ENCODE measurements at regions of chr5 and their contacts with region 1.

Region 1: DNA sequence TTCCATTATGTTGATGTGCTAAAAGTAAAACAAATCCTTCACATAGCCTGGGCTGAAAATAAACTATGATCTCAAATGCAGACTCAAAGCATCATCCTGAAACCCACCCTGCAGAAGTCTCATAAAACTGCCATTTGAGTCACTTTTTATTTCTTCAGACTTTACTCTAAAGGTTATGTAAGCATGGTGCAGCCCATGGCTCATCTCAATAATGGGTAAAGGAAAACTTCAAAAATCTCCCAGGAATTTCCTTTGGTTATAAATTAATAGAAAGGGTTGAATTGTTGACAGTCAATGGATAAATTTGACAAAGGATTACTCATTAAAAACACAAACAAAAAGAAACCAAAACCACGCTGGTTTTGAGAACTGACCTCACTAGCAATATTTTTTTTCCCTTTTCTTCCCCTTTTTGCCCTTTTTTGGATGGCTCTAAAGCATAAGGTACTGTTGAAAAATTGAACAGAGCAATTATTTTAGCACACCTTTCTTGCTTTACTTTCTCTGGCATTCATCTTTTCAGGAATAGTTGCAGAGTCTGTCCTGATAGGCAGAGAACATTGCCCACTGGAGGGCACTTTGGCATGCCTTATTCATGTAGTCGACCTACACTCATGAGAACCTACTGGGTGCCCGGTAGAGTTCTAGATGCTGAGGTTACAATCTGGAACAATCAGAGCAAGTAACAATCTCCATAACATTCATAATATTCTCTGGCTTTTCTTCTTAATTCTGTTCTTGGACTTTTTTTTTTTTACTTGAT is 191.4 kb downstream of the TMEM167A start:
- DNase-seq: peak; percentile 46
- H3K4me3 Mint-ChIP-seq: peak overlapping the region; percentile 47
- H3K27ac Mint-ChIP-seq: peak overlapping the region; percentile 18
- H3K4me1 Mint-ChIP-seq: peaks cover 29% of the 10 kb centered on the region
- H3K27me3 Mint-ChIP-seq: no peaks in the 10 kb centered on the region
- CTCF ChIP-seq: no peak

Region 2: GRCh38 chr5:83430130-83431010 is 544.6 kb after region 1 on chr5:
- CTCF ChIA-PET with region 1: no interaction called
- intact Hi-C with region 1: loop called (anchors 2 kb)
- DNase-seq: peak; percentile 81
- H3K4me3 Mint-ChIP-seq: no peak overlapping the region
- H3K27ac Mint-ChIP-seq: no peak overlapping the region
- H3K4me1 Mint-ChIP-seq: no peaks in the 10 kb centered on the region
- H3K27me3 Mint-ChIP-seq: no peaks in the 10 kb centered on the region
- CTCF ChIP-seq: peak; percentile 89

Region 3: DNA sequence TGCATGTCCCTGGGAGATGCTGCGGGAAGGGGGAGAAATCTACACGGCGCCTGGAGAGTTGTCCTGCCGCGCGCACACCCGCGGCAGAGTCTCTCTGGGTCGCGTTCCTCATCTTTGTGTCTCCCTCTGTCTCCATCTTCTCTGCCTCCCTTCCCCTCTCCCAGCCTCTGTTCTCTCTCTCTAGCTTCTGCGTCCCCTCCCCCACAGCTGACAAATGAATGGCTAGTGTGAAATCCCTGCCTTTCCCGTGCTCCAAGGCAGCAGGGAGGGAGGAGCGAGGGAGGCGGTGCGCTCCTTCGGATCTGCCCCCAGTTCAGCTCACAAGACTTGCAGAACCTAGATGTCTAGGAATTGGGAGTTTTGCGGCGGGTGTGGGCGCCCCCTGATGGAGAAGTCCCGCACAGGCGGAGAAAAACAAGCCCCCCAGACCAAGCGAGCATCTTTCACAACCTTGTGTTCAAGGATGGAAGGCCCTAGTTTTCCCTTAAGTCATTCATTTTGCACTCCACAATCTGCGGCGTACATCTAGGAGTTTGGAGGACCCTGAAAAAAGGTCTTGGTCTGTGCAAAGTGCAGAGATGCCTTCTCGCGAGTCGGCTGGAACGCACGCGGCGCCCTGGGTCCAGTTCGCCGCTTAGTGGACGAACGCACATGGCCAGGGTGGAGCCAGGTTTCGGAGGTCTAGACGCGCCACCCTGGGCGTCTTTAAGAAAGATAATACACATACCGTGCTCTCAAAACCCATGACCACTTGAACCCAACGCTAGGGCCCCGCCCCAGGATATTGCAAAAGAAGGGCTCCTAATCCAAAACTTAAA is 587.7 kb after region 1 on chr5:
- CTCF ChIA-PET with region 1: no interaction called
- intact Hi-C with region 1: loop called (anchors 2 kb)
- DNase-seq: peak; percentile 94
- H3K4me3 Mint-ChIP-seq: peak overlapping the region; percentile 77
- H3K27ac Mint-ChIP-seq: peak overlapping the region; percentile 84
- H3K4me1 Mint-ChIP-seq: peaks cover 49% of the 10 kb centered on the region
- H3K27me3 Mint-ChIP-seq: peaks cover 13% of the 10 kb centered on the region
- CTCF ChIP-seq: peak; percentile 97